Ovary (tissue), 10 donors: ENCODE measurements at regions of chr2 and their contacts with region 1.

Region 1: GRCh38 chr2:66495788-66496640 is 61.1 kb downstream of the MEIS1 start:
- DNase-seq: peak; percentile 65 to 79 (median 72)
- H3K4me3 ChIP-seq: no peak overlapping the region
- H3K27ac ChIP-seq: peak overlapping the region in 1 of 2 donors; percentile 25
- H3K4me1 ChIP-seq: peaks cover 17% of the 10 kb centered on the region
- H3K27me3 ChIP-seq: no peaks in the 10 kb centered on the region
- CTCF ChIP-seq: peak in 2 of 3 donors; percentile 41 to 45
- EP300 ChIP-seq: no peak
- POLR2A ChIP-seq: no peak

Region 2: DNA sequence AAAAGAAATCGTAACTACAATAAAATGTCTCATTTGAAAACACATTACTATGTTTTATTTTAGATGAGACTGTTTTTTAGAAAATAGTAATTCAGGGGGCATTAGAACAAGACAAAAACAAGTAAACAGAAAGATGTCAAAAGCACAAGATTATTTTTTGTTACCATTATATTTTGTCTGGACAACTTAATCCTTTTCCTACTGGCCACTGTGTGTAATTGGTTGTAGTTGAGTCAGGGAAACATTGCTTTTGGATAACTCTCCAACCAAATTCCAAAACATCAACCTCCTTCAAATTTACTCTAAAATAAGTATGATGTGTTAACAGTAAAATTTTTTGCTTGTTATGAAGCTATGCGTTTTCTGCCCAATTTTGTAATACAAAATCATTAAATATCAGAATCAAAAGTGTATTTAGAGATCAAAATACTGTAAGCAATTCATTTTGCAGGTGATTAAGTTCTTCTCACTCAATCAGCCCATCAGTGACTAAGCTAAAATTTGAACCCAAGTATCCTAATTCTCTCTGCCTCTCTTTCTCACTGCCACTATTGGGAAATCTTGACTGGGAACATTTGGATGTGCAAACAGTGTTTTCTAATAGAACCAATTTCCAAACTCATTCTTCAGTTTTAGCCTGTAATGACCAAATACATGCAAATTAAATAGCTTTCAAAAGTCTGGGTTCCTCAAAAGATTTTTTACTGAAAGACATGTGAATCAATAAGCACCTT is 72.5 kb before region 1 on chr2:
- intact Hi-C with region 1: no loop called
- DNase-seq: no peak
- H3K4me3 ChIP-seq: no peak overlapping the region
- H3K27ac ChIP-seq: no peak overlapping the region
- H3K4me1 ChIP-seq: peaks cover 6% of the 10 kb centered on the region
- H3K27me3 ChIP-seq: no peaks in the 10 kb centered on the region
- CTCF ChIP-seq: no peak
- EP300 ChIP-seq: no peak
- POLR2A ChIP-seq: no peak

Region 3: GRCh38 chr2:66445925-66446860 is 49.8 kb before region 1 on chr2:
- intact Hi-C with region 1: loop called in 1 of 4 experiments (anchors 10 kb)
- DNase-seq: peak; percentile 46 to 78 (median 62)
- H3K4me3 ChIP-seq: peak overlapping the region; percentile 49
- H3K27ac ChIP-seq: peak overlapping the region; percentile 81 to 86
- H3K4me1 ChIP-seq: no peaks in the 10 kb centered on the region
- H3K27me3 ChIP-seq: no peaks in the 10 kb centered on the region
- CTCF ChIP-seq: no peak
- EP300 ChIP-seq: no peak
- POLR2A ChIP-seq: no peak

Region 4: GRCh38 chr2:66888791-66889631 is 393.0 kb after region 1 on chr2:
- intact Hi-C with region 1: no loop called
- DNase-seq: no peak
- H3K4me3 ChIP-seq: no peak overlapping the region
- H3K27ac ChIP-seq: no peak overlapping the region
- H3K4me1 ChIP-seq: peaks cover 2% of the 10 kb centered on the region
- H3K27me3 ChIP-seq: no peaks in the 10 kb centered on the region
- CTCF ChIP-seq: no peak
- EP300 ChIP-seq: no peak
- POLR2A ChIP-seq: no peak